Activated B cell treated with CpG ODN at 0.5 μM for 24 hours (primary cell): ENCODE measurements at regions of chr18 and their contacts with region 1.

Region 1: GRCh38 chr18:46173393-46174341 is 69.5 kb downstream of the HAUS1 start:
- DNase-seq: peak; percentile 91
- ATAC-seq: peak; percentile 88
- H3K4me3 Mint-ChIP-seq: peak overlapping the region; percentile 97
- H3K27ac Mint-ChIP-seq: peak overlapping the region; percentile 99
- H3K4me1 Mint-ChIP-seq: peaks cover 44% of the 10 kb centered on the region
- H3K27me3 Mint-ChIP-seq: no peaks in the 10 kb centered on the region
- CTCF ChIP-seq: peak; percentile 52

Region 2: GRCh38 chr18:45652303-45653080 is 521.2 kb before region 1 on chr18:
- CTCF ChIA-PET with region 1: no interaction called
- POLR2A ChIA-PET with region 1: no interaction called
- intact Hi-C with region 1: no loop called
- DNase-seq: no peak
- ATAC-seq: no peak
- H3K4me3 Mint-ChIP-seq: no peak overlapping the region
- H3K27ac Mint-ChIP-seq: no peak overlapping the region
- H3K4me1 Mint-ChIP-seq: no peaks in the 10 kb centered on the region
- H3K27me3 Mint-ChIP-seq: peaks cover 10% of the 10 kb centered on the region
- CTCF ChIP-seq: no peak

Region 3: DNA sequence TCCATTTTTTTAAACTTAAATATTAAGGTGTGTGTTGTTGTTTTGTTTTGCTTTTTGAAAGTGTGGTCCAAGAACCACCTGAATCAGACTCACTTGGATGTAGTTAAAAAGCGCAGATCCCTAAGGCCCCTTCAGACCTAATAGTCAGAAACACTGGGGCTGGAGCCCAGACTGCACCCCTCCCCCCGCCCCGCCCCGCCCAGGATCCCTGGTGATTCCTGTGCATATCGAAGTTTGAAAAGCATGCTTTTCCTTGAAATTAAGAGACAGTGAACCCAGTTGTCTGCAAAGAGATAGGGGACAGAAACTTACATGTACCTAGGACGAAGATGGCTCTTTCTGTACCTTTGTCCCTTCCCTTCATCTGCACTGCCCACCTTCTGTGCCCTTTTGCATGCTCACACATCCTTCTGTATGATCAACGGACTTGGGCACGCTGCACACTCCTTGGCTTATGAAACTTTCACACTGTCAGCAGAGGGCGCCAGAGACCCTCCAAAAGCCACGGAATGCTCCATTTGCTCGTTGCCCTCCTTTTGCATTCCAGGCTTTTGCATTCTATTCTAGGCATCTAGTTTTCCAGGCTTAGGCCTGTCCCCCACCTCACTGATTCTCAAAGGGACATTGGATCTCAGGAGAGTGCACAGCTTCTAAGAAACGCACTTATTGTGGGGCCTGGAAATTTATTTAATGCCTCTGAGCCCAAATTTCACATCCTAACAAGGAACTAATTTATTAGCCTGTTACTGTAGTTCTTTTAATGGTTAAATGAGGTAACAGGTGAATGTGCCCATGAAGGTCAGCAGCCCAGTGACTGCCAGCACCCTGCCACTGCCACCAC is 482.5 kb before region 1 on chr18:
- CTCF ChIA-PET with region 1: interaction called, 4 read pairs
- POLR2A ChIA-PET with region 1: no interaction called
- intact Hi-C with region 1: loop called (anchors 5 kb)
- DNase-seq: peak; percentile 41
- ATAC-seq: no peak
- H3K4me3 Mint-ChIP-seq: no peak overlapping the region
- H3K27ac Mint-ChIP-seq: no peak overlapping the region
- H3K4me1 Mint-ChIP-seq: peaks cover 38% of the 10 kb centered on the region
- H3K27me3 Mint-ChIP-seq: peaks cover 3% of the 10 kb centered on the region
- CTCF ChIP-seq: peak; percentile 52

Region 4: GRCh38 chr18:46104128-46104911 is 69.3 kb before region 1 on chr18 and contains the start of gene HAUS1:
- CTCF ChIA-PET with region 1: no interaction called
- POLR2A ChIA-PET with region 1: interaction called, 4 read pairs
- intact Hi-C with region 1: loop called (anchors 1 kb)
- DNase-seq: peak; percentile 81
- ATAC-seq: peak; percentile 99
- H3K4me3 Mint-ChIP-seq: peak within 1 kb of the TSS; percentile 98
- H3K27ac Mint-ChIP-seq: peak within 1 kb of the TSS; percentile 82
- H3K4me1 Mint-ChIP-seq: peaks cover 19% of the 10 kb centered on the region
- H3K27me3 Mint-ChIP-seq: no peaks in the 10 kb centered on the region
- CTCF ChIP-seq: no peak
- total RNA-seq, gene HAUS1: 34.6 and 39.5 TPM in 2 replicates

Region 5: DNA sequence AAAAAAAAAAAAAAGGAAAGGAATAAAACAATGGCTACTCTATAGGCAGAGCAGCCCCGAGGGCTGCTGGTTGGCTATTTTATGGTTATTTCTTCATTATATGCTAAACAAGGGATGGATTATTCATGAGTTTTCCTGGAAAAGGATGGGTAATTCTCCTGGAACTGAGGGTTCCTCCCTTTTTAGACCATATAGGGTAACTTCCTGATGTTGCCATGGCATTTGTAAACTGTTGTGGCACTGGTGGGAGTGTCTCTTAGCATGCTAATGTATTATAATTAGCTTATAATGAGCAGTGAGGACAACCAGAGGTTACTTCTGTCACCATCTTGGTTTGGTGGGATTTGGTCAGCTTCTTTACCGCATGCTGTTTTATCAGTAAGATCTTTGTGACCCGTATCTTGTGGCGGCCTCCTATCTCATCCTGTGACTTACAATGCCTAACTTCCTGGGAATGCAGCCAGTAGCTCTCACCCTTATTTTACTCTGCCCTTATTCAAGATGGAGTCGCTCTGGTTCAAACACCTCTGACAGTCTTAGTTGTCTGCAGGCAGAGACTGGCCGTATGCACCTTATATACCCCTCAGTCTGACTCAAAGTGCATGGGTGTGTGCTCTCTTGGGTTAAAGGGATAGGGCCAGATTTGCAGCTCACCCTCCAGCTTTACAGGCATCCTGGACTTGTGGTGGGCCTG is 11.8 kb before region 1 on chr18:
- CTCF ChIA-PET with region 1: interaction called, 12 read pairs
- POLR2A ChIA-PET with region 1: interaction called, 6 read pairs
- intact Hi-C with region 1: no loop called
- DNase-seq: no peak
- ATAC-seq: no peak
- H3K4me3 Mint-ChIP-seq: no peak overlapping the region
- H3K27ac Mint-ChIP-seq: no peak overlapping the region
- H3K4me1 Mint-ChIP-seq: peaks cover 4% of the 10 kb centered on the region
- H3K27me3 Mint-ChIP-seq: no peaks in the 10 kb centered on the region
- CTCF ChIP-seq: no peak

Region 6: DNA sequence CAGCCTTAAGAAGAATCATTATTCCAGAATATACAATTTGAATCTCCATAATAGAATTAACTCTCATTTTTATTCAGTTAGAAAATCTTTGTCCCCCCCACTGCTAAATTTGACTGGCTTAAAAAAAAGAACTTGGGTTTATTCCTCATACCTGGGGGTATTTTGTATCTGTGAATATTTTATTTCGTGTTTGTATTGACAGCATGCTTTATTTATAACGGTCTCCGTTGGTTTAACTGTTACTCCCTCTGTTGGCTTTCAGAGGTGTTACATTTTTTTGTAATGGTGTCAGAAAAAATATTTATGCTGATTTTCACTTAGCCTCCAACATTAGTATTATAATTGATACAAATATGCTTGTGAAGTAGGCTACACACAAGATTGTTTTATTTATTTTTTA is 39.6 kb after region 1 on chr18:
- CTCF ChIA-PET with region 1: interaction called, 22 read pairs
- POLR2A ChIA-PET with region 1: interaction called, 5 read pairs
- intact Hi-C with region 1: loop called (anchors 1 kb)
- DNase-seq: no peak
- ATAC-seq: peak; percentile 52
- H3K4me3 Mint-ChIP-seq: no peak overlapping the region
- H3K27ac Mint-ChIP-seq: no peak overlapping the region
- H3K4me1 Mint-ChIP-seq: peaks cover 53% of the 10 kb centered on the region
- H3K27me3 Mint-ChIP-seq: no peaks in the 10 kb centered on the region
- CTCF ChIP-seq: peak; percentile 44

Region 7: DNA sequence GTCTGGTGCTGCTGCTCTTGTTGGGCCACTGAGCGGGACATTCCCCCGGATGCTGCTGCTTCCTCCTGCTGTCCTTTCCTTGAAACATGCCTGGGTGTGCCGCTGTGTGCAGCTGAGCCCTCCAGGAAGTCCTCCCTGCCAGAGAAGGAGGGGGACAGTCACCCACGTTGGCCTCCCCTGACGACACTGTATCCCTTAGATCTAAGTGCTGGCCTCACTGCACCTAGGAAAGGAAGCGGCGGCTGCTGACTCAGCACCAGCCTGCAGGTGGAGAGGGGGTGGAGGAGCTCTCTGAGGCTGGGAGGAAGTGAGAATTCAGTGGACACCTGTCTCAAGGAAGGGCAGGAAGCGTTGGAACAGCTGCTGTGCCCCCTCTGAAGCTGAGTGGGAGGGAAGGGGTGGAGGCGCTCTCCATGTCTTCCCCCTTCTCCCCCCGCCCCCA is 170.3 kb after region 1 on chr18:
- CTCF ChIA-PET with region 1: no interaction called
- POLR2A ChIA-PET with region 1: interaction called, 3 read pairs
- intact Hi-C with region 1: loop called (anchors 5 kb)
- DNase-seq: no peak
- ATAC-seq: peak; percentile 69
- H3K4me3 Mint-ChIP-seq: peak overlapping the region; percentile 13
- H3K27ac Mint-ChIP-seq: peak overlapping the region; percentile 57
- H3K4me1 Mint-ChIP-seq: peaks cover 30% of the 10 kb centered on the region
- H3K27me3 Mint-ChIP-seq: peaks cover 7% of the 10 kb centered on the region
- CTCF ChIP-seq: no peak

Region 8: GRCh38 chr18:46917108-46917802 is 743.6 kb after region 1 on chr18 and contains the starts of genes KATNAL2 and PIAS2:
- CTCF ChIA-PET with region 1: no interaction called
- POLR2A ChIA-PET with region 1: interaction called, 5 read pairs
- intact Hi-C with region 1: loop called (anchors 1 kb)
- DNase-seq: peak; percentile 85
- ATAC-seq: peak; percentile 93
- H3K4me3 Mint-ChIP-seq: peak within 1 kb of the TSS; percentile 87
- H3K27ac Mint-ChIP-seq: peak within 1 kb of the TSS; percentile 79
- H3K4me1 Mint-ChIP-seq: peaks cover 30% of the 10 kb centered on the region
- H3K27me3 Mint-ChIP-seq: no peaks in the 10 kb centered on the region
- CTCF ChIP-seq: no peak
- total RNA-seq, gene KATNAL2: 1.2 and 2.6 TPM in 2 replicates
- total RNA-seq, gene PIAS2: 34.2 and 36.0 TPM in 2 replicates